ENCODE measurements at regions of chr2 and their contacts with region 1.

Region 1: DNA sequence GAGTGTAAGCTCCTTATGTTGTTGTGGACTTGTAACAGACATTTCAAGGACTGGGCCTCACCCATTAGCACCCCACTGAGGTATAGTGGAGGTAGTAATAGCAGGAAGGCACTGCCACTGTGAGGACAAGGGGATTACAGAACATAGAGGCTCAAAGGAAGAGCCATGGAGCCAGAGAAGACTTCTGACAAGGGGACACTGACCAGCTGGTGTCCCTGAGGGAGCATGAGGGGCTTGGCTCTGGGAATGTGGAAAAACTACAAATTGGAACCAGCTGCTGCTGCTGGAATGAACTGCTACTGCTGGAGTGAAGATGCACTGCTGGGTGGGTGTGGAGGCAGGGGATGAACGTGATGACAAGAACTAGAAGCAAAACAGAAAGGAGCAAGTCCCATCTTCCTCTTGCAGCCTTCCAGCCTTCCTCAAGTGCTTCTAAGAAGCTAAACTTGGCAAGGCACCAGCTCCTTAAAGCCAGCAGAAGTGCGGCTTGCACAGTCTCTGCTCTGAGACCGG is 167.3 kb upstream of the NOSTRIN start:
- DNase-seq: no peak
- H3K4me3 ChIP-seq: no peak overlapping the region
- H3K27ac ChIP-seq: no peak overlapping the region
- H3K4me1 ChIP-seq: peaks cover 0 to 10% of the 10 kb centered on the region in 2 donors
- H3K27me3 ChIP-seq: no peaks in the 10 kb centered on the region
- CTCF ChIP-seq: no peak

Region 2: DNA sequence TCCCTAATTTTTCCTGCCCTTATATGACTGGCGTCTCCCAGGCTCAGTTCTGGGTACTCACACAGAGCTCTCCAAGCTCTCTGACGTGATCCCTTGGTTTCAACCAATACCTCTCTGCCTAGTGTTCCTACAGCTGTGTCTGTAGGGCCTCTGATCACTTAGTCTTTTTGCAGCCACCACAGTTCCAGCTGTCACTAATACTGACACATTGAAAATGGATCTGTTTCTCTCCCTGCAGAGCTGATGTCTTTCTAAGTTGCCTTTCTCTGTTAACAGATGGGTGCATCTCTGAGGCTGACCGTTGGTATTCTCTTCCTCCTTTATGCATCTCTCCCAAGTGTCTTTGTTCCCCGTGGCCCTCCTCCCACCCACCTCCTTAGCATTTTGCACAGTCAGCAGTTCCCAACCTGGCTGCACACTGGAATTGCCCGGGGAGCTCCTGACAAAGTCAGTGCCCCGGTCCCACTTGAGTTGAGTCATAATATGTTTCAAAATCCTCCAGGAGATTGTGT is 116.5 kb before region 1 on chr2:
- intact Hi-C with region 1: loop called (anchors 10 kb)
- DNase-seq: no peak
- H3K4me3 ChIP-seq: peak overlapping the region in 1 of 2 donors; percentile 13
- H3K27ac ChIP-seq: peak overlapping the region; percentile 35 to 47
- H3K4me1 ChIP-seq: peaks cover 0 to 12% of the 10 kb centered on the region in 2 donors
- H3K27me3 ChIP-seq: no peaks in the 10 kb centered on the region
- CTCF ChIP-seq: no peak

Region 3: DNA sequence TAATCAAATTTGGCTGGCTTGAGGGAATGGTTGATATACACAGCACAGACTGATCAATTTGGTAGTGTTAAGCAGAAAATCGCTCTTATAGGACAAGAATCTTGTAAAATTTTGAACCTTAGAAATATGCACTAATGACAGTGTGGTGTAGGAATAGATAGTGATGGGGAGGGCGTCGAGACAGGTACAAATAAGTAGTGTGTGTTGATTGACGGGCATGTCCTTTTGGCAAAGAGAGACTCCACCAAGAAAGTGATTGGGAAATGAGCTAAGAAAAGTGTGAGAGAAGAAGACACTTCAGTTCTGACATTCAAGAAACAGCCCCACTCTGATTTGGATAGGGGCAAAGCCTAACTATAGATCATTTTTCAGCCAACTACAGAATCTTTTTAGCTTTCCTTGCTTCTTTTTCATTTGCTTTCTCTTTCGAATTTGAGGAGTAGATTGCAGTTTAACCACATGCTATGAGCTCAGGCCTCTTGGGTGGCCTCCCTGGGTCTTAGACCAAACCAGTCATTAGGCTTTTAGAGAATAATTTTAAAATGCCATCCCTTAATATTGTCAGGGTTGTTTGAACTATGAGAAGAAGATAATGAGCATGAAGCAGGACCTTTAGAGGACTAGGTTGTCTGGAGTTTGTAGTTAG is 51.9 kb before region 1 on chr2:
- intact Hi-C with region 1: no loop called
- DNase-seq: no peak
- H3K4me3 ChIP-seq: no peak overlapping the region
- H3K27ac ChIP-seq: no peak overlapping the region
- H3K4me1 ChIP-seq: no peaks in the 10 kb centered on the region
- H3K27me3 ChIP-seq: no peaks in the 10 kb centered on the region
- CTCF ChIP-seq: no peak

Region 4: DNA sequence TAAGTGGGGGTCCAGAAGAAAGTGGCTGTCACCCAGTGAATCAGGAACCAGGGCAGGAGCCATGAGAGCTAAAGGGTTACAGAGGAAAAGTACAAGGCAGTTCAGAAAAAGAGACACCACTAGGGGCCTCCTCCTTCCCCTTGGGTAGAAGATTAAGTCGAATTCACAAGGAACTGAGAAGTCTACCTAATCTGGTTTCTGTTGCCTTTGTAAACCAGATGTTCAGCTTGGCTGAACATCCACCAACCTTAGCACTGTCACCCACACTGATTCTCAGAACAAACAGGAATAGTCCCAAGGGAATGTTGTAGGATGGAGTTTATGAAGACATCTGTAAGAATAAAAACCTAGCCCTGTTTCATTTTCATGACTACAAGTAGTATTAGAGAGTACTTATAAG is 76.9 kb after region 1 on chr2:
- intact Hi-C with region 1: no loop called
- DNase-seq: no peak
- H3K4me3 ChIP-seq: no peak overlapping the region
- H3K27ac ChIP-seq: no peak overlapping the region
- H3K4me1 ChIP-seq: no peaks in the 10 kb centered on the region
- H3K27me3 ChIP-seq: no peaks in the 10 kb centered on the region
- CTCF ChIP-seq: no peak

Region 5: DNA sequence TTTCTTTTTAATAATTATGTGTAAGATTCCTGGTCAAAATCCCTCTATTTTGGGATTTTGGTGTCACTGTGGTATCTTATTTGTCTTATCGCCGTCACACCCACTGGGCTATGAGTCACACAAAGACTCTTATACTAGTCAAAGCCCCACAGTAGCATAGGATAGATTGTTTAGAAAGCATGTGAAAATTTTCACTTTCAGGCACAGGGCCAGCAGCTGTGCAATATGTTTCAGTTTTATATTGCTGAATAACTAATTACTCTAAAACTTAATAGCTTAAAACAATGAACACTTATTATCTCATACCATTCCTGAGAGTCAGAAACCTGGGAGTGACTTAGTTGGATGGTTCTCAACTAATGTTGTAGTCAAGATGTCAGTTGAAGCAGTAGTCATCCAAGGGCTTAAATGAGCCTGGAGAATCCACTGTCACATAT is 1035.1 kb after region 1 on chr2:
- intact Hi-C with region 1: no loop called
- DNase-seq: no peak
- H3K4me3 ChIP-seq: no peak overlapping the region
- H3K27ac ChIP-seq: no peak overlapping the region
- H3K4me1 ChIP-seq: no peaks in the 10 kb centered on the region
- H3K27me3 ChIP-seq: no peaks in the 10 kb centered on the region
- CTCF ChIP-seq: no peak

Measured in ascending aorta (tissue), 2 donors.